ENCODE measurements at regions of chr6 and their contacts with region 1.

Region 1: DNA sequence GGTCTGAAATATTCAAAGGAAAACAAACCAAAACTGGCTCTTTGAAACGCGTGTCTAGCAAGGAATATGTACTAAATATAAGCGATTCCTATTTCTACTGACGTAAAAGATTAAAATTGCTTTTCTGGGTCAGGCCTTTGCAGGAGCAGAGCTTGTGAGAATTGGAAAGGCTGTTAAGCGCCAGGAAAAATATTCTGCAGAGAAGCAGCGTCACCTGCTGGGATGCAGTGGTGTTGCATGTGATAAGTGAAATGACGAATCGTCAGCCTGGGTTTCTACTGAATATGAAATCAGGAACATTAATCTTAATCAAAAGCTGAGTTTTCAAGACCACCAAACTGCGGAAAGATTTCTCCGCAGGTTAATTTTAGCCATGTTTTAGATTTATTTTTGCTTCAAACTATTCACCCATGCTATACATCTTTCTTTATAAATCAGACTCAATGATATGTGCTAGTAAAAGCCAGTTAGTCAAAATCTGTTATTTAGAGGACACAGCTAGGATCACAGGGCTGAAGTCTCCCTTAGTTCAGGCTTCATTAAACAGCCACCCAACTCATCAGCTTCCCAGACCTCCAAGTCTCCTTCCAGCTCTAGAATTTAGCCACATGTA is 67.4 kb downstream of the ALDH8A1 start:
- DNase-seq: peak; percentile 62 to 70
- H3K4me3 ChIP-seq: no peak overlapping the region
- H3K27ac ChIP-seq: no peak overlapping the region
- H3K4me1 ChIP-seq: peaks cover 0 to 6% of the 10 kb centered on the region in 2 donors
- H3K27me3 ChIP-seq: no peaks in the 10 kb centered on the region
- CTCF ChIP-seq: peak; percentile 78 to 97 (median 92)
- POLR2A ChIP-seq: no peak

Region 2: GRCh38 chr6:134123666-134124208 is 758.8 kb before region 1 on chr6:
- intact Hi-C with region 1: loop called (anchors 10 kb)
- DNase-seq: no peak
- H3K4me3 ChIP-seq: no peak overlapping the region
- H3K27ac ChIP-seq: no peak overlapping the region
- H3K4me1 ChIP-seq: no peaks in the 10 kb centered on the region
- H3K27me3 ChIP-seq: no peaks in the 10 kb centered on the region
- CTCF ChIP-seq: peak in 5 of 6 experiments; percentile 47 to 78 (median 72)
- POLR2A ChIP-seq: no peak

Region 3: GRCh38 chr6:134161036-134161435 is 721.5 kb before region 1 on chr6:
- intact Hi-C with region 1: loop called (anchors 5 kb)
- DNase-seq: no peak
- H3K4me3 ChIP-seq: no peak overlapping the region
- H3K27ac ChIP-seq: no peak overlapping the region
- H3K4me1 ChIP-seq: no peaks in the 10 kb centered on the region
- H3K27me3 ChIP-seq: no peaks in the 10 kb centered on the region
- CTCF ChIP-seq: no peak
- POLR2A ChIP-seq: no peak